B cell (primary cell): ENCODE measurements at regions of chr16 and their contacts with region 1.

Region 1: GRCh38 chr16:84116720-84117493 is at the start of gene MBTPS1:
- DNase-seq: peak; percentile 99
- ATAC-seq: peak; percentile 87
- H3K4me3 ChIP-seq: peak within 1 kb of the TSS; percentile 83 to 97 (median 94)
- H3K4me3 Mint-ChIP-seq: peak within 1 kb of the TSS; percentile 97
- H3K27ac ChIP-seq: peak within 1 kb of the TSS; percentile 75 to 94
- H3K27ac Mint-ChIP-seq: peak within 1 kb of the TSS; percentile 96
- H3K4me1 ChIP-seq: peaks cover 16 to 20% of the 10 kb centered on the region in 2 donors
- H3K4me1 Mint-ChIP-seq: peaks cover 20% of the 10 kb centered on the region
- H3K27me3 ChIP-seq: no peaks in the 10 kb centered on the region
- H3K27me3 Mint-ChIP-seq: no peaks in the 10 kb centered on the region
- CTCF ChIP-seq: peak; percentile 14
- total RNA-seq, gene MBTPS1: 119 and 120 TPM in 2 replicates

Region 2: GRCh38 chr16:84132527-84133285 is 15.8 kb after region 1 on chr16:
- CTCF ChIA-PET with region 1: interaction called, 11 read pairs
- POLR2A ChIA-PET with region 1: interaction called, 5 read pairs
- intact Hi-C with region 1: no loop called
- DNase-seq: peak; percentile 32
- ATAC-seq: peak; percentile 53
- H3K4me3 ChIP-seq: no peak overlapping the region
- H3K4me3 Mint-ChIP-seq: peak overlapping the region; percentile 13
- H3K27ac ChIP-seq: peak overlapping the region in 1 of 2 donors; percentile 40
- H3K27ac Mint-ChIP-seq: peak overlapping the region; percentile 67
- H3K4me1 ChIP-seq: peaks cover 9 to 16% of the 10 kb centered on the region in 2 donors
- H3K4me1 Mint-ChIP-seq: peaks cover 20% of the 10 kb centered on the region
- H3K27me3 ChIP-seq: no peaks in the 10 kb centered on the region
- H3K27me3 Mint-ChIP-seq: no peaks in the 10 kb centered on the region
- CTCF ChIP-seq: no peak

Region 3: DNA sequence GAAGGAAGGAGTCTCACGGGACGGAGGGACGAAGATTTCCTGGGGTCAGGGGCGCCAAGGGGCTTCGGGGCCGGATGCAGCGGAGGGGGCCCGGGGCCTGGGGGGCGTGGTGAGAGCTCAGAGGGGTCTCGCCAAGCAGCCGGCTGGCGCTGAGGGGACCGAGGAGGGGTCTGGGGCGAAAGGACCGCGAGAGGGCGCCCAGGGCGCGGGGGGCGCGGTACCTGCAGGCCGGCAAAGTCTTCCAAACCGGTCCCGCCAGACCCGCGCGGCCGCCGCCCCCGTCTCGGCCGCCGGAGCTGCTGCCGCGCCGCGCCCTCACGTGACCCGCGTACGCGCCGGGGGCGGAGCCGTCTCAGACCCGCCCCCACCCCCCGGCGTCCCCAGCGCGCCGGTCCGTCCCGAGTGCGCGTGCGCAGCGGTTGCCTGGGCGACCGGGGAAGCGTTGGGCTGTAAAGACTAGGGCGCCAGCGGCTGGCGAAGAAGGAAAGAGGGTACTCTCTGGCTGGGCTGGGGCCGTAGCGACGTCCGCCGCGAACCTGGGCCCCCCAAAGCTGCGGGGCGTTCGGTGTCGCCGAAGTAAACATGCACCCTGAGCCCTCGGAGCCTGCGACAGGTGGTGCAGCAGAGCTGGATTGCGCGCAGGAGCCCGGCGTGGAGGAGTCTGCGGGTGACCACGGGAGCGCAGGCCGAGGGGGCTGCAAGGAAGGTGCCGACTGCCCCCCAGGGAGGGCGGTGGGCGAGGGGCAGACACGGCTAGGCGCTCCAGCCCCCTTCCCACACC is 28.1 kb after region 1 on chr16 and contains the starts of genes DNAAF1 and HSDL1:
- CTCF ChIA-PET with region 1: interaction called, 7 read pairs
- POLR2A ChIA-PET with region 1: interaction called, 5 read pairs
- intact Hi-C with region 1: loop called (anchors 1 kb)
- DNase-seq: peak; percentile 96
- ATAC-seq: peak; percentile 88
- H3K4me3 ChIP-seq: peak within 1 kb of the TSS; percentile 46 to 80 (median 75)
- H3K4me3 Mint-ChIP-seq: peak within 1 kb of the TSS; percentile 96
- H3K27ac ChIP-seq: peak within 1 kb of the TSS; percentile 34 to 86
- H3K27ac Mint-ChIP-seq: peak within 1 kb of the TSS; percentile 91
- H3K4me1 ChIP-seq: peaks cover 3 to 14% of the 10 kb centered on the region in 2 donors
- H3K4me1 Mint-ChIP-seq: peaks cover 14% of the 10 kb centered on the region
- H3K27me3 ChIP-seq: peaks cover 0 to 2% (median 0%) of the 10 kb centered on the region in 4 experiments
- H3K27me3 Mint-ChIP-seq: peaks cover 16% of the 10 kb centered on the region
- CTCF ChIP-seq: no peak
- total RNA-seq, gene DNAAF1: 0.29 and 0.30 TPM in 2 replicates
- total RNA-seq, gene HSDL1: 30.8 and 40.2 TPM in 2 replicates

Region 4: DNA sequence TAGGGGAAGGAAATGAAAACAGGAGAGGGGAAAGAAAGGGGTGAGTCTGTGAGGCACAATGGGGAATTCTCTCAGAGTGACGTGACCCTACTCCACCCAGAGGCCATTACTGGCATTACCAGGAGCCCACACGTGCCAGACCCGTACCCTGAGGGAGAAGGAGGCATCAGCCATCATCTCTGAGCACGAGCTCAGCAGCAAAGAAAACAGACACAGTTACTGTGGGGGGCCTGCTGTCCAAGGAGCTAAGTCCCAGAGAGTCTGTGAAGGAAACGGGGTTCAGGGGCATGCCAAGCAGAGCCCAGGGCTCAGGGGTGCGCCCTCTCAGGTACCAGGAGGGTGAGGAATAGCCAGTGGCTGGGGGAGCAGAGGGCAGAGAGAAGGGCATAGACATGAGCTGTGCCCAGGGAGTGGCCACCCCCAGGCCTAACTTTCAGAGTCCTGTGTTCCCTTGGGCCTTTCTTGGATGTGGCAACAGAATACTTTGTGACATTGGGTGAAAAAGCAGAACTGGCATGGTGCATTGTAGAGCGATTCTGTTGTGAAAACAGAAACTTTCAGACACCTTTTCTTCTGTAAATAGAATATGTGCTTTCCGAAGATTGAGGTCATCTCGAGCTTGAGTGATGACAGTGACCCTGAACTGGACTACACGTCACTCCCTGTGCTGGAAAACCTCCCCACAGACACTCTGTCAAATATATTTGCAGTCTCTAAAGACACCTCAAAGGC is 58.6 kb after region 1 on chr16:
- CTCF ChIA-PET with region 1: interaction called, 12 read pairs
- POLR2A ChIA-PET with region 1: no interaction called
- intact Hi-C with region 1: no loop called
- DNase-seq: peak; percentile 64
- ATAC-seq: peak; percentile 87
- H3K4me3 ChIP-seq: no peak overlapping the region
- H3K4me3 Mint-ChIP-seq: no peak overlapping the region
- H3K27ac ChIP-seq: no peak overlapping the region
- H3K27ac Mint-ChIP-seq: no peak overlapping the region
- H3K4me1 ChIP-seq: peaks cover 0 to 3% of the 10 kb centered on the region in 2 donors
- H3K4me1 Mint-ChIP-seq: peaks cover 6% of the 10 kb centered on the region
- H3K27me3 ChIP-seq: no peaks in the 10 kb centered on the region
- H3K27me3 Mint-ChIP-seq: peaks cover 3% of the 10 kb centered on the region
- CTCF ChIP-seq: peak; percentile 64

Region 5: GRCh38 chr16:84186685-84187437 is 70.0 kb after region 1 on chr16 and contains the start of gene TAF1C:
- CTCF ChIA-PET with region 1: interaction called, 28 read pairs
- POLR2A ChIA-PET with region 1: interaction called, 4 read pairs
- intact Hi-C with region 1: loop called (anchors 1 kb)
- DNase-seq: peak; percentile 96
- ATAC-seq: peak; percentile 99
- H3K4me3 ChIP-seq: peak within 1 kb of the TSS; percentile 70 to 98 (median 88)
- H3K4me3 Mint-ChIP-seq: peak within 1 kb of the TSS; percentile 96
- H3K27ac ChIP-seq: peak within 1 kb of the TSS; percentile 26 to 83
- H3K27ac Mint-ChIP-seq: peak within 1 kb of the TSS; percentile 88
- H3K4me1 ChIP-seq: peaks cover 7 to 10% of the 10 kb centered on the region in 2 donors
- H3K4me1 Mint-ChIP-seq: peaks cover 22% of the 10 kb centered on the region
- H3K27me3 ChIP-seq: no peaks in the 10 kb centered on the region
- H3K27me3 Mint-ChIP-seq: no peaks in the 10 kb centered on the region
- CTCF ChIP-seq: peak; percentile 88
- total RNA-seq, gene TAF1C: 110 and 115 TPM in 2 replicates